Ovary (tissue), 10 donors: ENCODE measurements at regions of chr1 and their contacts with region 1.

Region 1: DNA sequence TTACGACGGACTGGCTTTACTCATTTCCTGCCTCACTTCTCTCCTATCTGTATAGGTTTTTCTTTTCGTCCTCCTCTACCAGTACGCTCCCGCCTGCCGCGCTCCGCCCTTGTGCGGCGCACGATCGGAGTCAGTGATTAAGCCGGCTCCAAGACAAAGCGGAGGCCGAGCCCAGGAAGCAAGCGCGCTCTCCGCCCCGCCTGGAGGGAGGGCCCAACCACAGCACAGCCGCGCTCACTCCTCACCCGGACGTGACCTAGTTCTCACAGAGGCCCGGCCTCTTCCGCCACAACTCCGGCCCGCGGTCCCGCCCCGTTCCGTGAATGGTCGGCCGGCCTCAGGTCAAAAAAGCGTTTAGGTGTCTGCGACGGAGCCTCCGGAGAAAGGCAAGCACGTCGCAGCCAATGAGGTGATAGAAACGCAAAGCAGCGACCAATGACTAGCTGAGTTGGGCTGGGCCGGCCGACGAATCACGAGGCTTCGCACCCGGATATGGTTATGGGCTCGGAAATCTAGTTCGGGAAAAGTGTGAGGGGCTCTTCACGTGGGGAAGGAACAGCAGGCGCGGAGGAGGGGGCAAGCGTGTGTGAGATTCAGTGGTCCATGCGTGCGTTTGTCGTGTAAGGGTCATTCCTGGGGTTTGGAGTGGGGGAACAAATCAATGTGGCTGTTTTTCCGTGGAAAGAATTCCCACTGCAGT is at the start of gene METTL13:
- DNase-seq: peak; percentile 96 to 98 (median 97)
- H3K4me3 ChIP-seq: peak within 1 kb of the TSS; percentile 52
- H3K27ac ChIP-seq: peak within 1 kb of the TSS in 1 of 2 donors; percentile 75
- H3K4me1 ChIP-seq: peaks cover 12% of the 10 kb centered on the region
- H3K27me3 ChIP-seq: no peaks in the 10 kb centered on the region
- CTCF ChIP-seq: no peak
- EP300 ChIP-seq: no peak
- POLR2A ChIP-seq: peak; percentile 82
- total RNA-seq, gene METTL13: 9.1 to 24.4 (median 19.1) TPM

Region 2: GRCh38 chr1:171152549-171152948 is 628.8 kb before region 1 on chr1:
- intact Hi-C with region 1: no loop called
- DNase-seq: no peak
- H3K4me3 ChIP-seq: no peak overlapping the region
- H3K27ac ChIP-seq: no peak overlapping the region
- H3K4me1 ChIP-seq: no peaks in the 10 kb centered on the region
- H3K27me3 ChIP-seq: no peaks in the 10 kb centered on the region
- CTCF ChIP-seq: no peak
- EP300 ChIP-seq: no peak
- POLR2A ChIP-seq: no peak

Region 3: GRCh38 chr1:171683870-171684269 is 97.5 kb before region 1 on chr1:
- intact Hi-C with region 1: loop called in 1 of 4 experiments (anchors 5 kb)
- DNase-seq: no peak
- H3K4me3 ChIP-seq: no peak overlapping the region
- H3K27ac ChIP-seq: no peak overlapping the region
- H3K4me1 ChIP-seq: no peaks in the 10 kb centered on the region
- H3K27me3 ChIP-seq: no peaks in the 10 kb centered on the region
- CTCF ChIP-seq: no peak
- EP300 ChIP-seq: no peak
- POLR2A ChIP-seq: no peak

Region 4: DNA sequence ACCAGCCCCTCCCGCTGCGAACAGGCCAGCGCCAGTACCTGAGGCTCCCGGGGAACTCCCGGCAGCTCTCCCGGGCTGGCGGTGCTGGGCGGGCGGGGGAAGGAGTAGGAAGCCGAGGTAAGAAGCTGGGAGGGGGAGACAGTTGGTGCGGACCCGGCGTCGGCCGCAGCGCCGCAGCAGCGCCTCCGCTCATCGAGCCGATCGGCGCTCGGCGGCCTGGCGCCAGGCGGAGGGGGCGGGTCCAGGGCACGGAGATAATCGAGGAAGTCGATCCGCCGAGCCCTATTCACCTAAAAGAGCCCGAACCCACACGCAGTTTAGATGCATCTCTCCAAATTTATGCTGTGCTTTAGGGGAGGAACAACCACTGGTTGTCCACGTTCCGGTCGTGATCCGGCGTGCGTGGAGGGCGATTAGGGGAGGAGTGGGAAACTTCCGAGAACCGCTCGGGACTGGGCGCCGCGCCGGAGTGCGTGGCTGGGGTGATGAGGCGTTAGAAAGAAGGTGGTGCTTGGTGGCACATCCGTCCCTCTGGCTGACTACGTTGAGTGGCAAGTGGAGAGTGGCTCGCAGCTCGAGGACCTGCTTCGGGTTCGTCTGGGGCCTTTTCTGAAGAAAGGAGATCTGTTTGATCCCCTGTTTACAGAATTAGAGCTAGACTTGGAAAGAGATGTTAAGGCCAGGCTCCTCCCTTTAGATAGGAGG is 39.3 kb before region 1 on chr1 and contains the start of gene VAMP4:
- intact Hi-C with region 1: loop called in 2 of 4 experiments (anchors 2 to 5 kb)
- DNase-seq: peak; percentile 89 to 93 (median 92)
- H3K4me3 ChIP-seq: peak within 1 kb of the TSS; percentile 77
- H3K27ac ChIP-seq: peak within 1 kb of the TSS; percentile 71 to 88
- H3K4me1 ChIP-seq: peaks cover 5% of the 10 kb centered on the region
- H3K27me3 ChIP-seq: no peaks in the 10 kb centered on the region
- CTCF ChIP-seq: peak in 1 of 3 donors; percentile 10
- EP300 ChIP-seq: no peak
- POLR2A ChIP-seq: peak; percentile 97
- total RNA-seq, gene VAMP4: 6.7 to 14.1 (median 12.3) TPM

Region 5: GRCh38 chr1:171883849-171884248 is 102.5 kb after region 1 on chr1:
- intact Hi-C with region 1: no loop called
- DNase-seq: no peak
- H3K4me3 ChIP-seq: no peak overlapping the region
- H3K27ac ChIP-seq: no peak overlapping the region
- H3K4me1 ChIP-seq: no peaks in the 10 kb centered on the region
- H3K27me3 ChIP-seq: peaks cover 4% of the 10 kb centered on the region
- CTCF ChIP-seq: no peak
- EP300 ChIP-seq: no peak
- POLR2A ChIP-seq: no peak